ENCODE measurements at regions of chr5 and their contacts with region 1.

Region 1: GRCh38 chr5:17056056-17056690 is 120.1 kb upstream of the MYO10 start:
- DNase-seq: peak; percentile 79
- ATAC-seq: peak; percentile 53
- H3K4me3 ChIP-seq: no peak overlapping the region
- H3K27ac ChIP-seq: peak overlapping the region; percentile 68
- H3K4me1 ChIP-seq: peaks cover 37% of the 10 kb centered on the region
- H3K27me3 ChIP-seq: no peaks in the 10 kb centered on the region
- CTCF ChIP-seq: no peak

Region 2: DNA sequence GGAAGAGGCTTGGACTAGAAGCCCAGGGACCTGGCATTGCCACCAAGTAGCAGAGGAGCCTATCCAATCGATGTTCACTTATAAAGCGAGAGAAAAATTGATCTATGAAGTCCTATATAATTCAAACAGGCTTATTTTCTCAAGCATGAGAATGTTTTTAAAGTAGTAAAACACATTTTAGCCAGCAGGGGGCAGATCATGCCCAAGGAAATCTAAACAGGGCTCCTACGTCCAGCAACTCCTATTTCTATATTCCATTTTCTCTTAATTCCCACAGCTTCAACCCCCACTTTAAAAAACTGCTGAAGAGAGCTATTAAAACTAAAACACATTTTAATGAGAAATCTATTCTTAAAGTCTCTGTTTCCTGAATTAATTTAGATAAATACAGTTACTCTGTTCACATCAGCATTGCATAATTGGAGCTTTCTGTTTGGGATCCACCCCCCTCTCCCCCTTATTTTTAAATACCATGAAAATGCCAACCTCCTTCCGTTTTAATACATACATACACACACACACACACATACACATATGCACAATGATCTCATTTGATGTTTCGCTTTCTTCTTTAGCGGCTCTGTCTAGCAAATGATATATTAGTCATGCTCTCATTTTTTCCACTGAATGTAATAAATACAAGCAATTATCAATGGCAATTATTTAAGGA is 265.0 kb before region 1 on chr5:
- CTCF ChIA-PET with region 1: no interaction called
- POLR2A ChIA-PET with region 1: no interaction called
- intact Hi-C with region 1: loop called (anchors 5 kb)
- DNase-seq: peak; percentile 95
- ATAC-seq: peak; percentile 40
- H3K4me3 ChIP-seq: no peak overlapping the region
- H3K27ac ChIP-seq: no peak overlapping the region
- H3K4me1 ChIP-seq: no peaks in the 10 kb centered on the region
- H3K27me3 ChIP-seq: no peaks in the 10 kb centered on the region
- CTCF ChIP-seq: peak; percentile 97

Region 3: DNA sequence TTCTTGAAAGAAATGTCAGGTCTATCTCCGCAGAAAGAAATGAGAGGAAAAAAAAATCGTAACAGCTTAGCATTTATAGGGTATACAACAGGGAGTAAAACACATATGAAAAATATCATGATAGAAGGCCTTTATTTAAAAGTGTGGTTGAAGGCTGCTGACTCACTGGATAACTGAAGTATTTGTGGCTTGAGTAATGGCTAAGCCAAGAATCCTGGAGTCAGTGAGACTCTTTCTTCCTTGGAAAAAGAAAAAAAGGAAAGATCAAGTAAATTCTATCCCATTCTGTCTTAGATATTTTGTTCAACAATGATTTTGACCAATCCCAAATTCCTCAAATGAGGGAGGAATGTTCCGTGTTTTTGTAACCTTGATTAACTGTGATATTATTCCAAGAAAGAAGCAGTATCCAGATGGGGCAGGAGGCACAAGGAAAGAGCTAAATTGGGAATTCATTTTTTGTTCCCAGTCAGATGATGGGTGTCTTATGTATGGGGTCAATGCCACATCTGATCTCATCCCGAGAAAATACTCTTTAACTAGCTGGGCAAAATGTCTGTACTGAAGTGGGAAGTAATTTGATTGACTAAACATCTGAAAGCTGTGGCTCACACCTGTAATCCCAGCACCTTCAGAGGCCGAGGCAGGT is 55.8 kb before region 1 on chr5:
- CTCF ChIA-PET with region 1: no interaction called
- POLR2A ChIA-PET with region 1: no interaction called
- intact Hi-C with region 1: loop called (anchors 1 kb)
- DNase-seq: peak; percentile 99
- ATAC-seq: peak; percentile 99
- H3K4me3 ChIP-seq: peak overlapping the region; percentile 9; the same call in 1 of the 2 replicates
- H3K27ac ChIP-seq: peak overlapping the region; percentile 84
- H3K4me1 ChIP-seq: peaks cover 21% of the 10 kb centered on the region
- H3K27me3 ChIP-seq: no peaks in the 10 kb centered on the region
- CTCF ChIP-seq: no peak

Region 4: GRCh38 chr5:17012302-17012701 is 43.9 kb before region 1 on chr5:
- CTCF ChIA-PET with region 1: no interaction called
- POLR2A ChIA-PET with region 1: no interaction called
- intact Hi-C with region 1: no loop called
- DNase-seq: peak; percentile 98
- ATAC-seq: peak; percentile 88
- H3K4me3 ChIP-seq: no peak overlapping the region
- H3K27ac ChIP-seq: peak overlapping the region; percentile 57
- H3K4me1 ChIP-seq: peaks cover 20% of the 10 kb centered on the region
- H3K27me3 ChIP-seq: no peaks in the 10 kb centered on the region
- CTCF ChIP-seq: no peak

Region 5: DNA sequence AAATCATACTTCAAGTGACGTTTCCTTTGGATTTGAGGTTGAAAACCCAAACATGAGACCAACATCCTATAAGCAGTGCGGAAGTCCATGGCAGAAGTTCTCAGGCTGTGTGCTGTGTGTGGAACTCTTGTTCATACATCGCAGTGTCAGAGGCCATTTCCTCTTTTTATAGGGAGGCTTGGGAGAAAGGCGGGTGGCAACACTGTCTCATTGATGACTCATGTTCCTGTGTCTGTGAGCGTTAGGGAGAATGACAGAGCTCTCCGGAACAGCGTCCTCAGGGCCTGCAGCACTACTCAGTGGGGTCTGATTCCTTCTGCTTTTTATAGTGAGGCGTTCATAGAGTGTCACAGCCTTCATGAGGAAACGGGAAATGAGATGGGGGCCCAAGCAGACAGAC is 62.5 kb after region 1 on chr5:
- CTCF ChIA-PET with region 1: no interaction called
- POLR2A ChIA-PET with region 1: no interaction called
- intact Hi-C with region 1: loop called (anchors 2 kb)
- DNase-seq: peak; percentile 100
- ATAC-seq: peak; percentile 97
- H3K4me3 ChIP-seq: no peak overlapping the region; the same call in 1 of the 2 replicates
- H3K27ac ChIP-seq: peak overlapping the region; percentile 83
- H3K4me1 ChIP-seq: peaks cover 34% of the 10 kb centered on the region
- H3K27me3 ChIP-seq: no peaks in the 10 kb centered on the region
- CTCF ChIP-seq: no peak

Region 6: GRCh38 chr5:17189381-17190036 is 133.3 kb after region 1 on chr5:
- CTCF ChIA-PET with region 1: no interaction called
- POLR2A ChIA-PET with region 1: no interaction called
- intact Hi-C with region 1: loop called (anchors 5 kb)
- DNase-seq: peak; percentile 99
- ATAC-seq: peak; percentile 45
- H3K4me3 ChIP-seq: no peak overlapping the region
- H3K27ac ChIP-seq: peak overlapping the region; percentile 1; the same call in 1 of the 2 replicates
- H3K4me1 ChIP-seq: peaks cover 53% of the 10 kb centered on the region
- H3K27me3 ChIP-seq: no peaks in the 10 kb centered on the region
- CTCF ChIP-seq: peak; percentile 100